Calu3 (cell line): ENCODE measurements at regions of chr2 and their contacts with region 1.

Region 1: DNA sequence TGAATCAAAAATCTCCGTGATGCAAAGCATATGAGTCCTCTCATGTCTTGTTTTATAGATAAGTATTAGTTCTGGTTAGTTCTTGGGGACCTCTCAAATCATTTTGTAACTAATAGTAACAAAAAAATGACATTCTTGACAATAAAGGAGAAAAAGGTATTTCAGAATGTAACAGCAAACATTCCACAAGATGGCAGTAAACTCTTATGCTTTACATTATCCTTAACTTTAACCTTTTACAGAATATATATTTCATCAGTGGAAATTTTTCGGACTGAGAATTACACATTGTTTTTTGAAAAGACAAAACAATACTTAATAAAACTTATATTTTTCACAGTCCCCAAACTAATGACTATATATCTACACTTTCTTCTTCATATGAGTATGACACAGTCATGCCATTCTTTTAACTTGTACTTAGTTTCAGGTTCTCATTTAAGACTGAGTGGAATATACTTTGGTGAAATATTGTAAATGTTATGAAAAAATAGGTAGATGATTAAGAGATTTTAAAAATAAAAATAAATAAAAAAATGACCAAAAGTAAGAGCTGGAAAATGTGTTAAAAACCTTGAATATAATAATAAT is 142.9 kb upstream of the NXPH2 start:
- DNase-seq: no peak
- H3K4me3 Mint-ChIP-seq: no peak overlapping the region
- H3K27ac Mint-ChIP-seq: no peak overlapping the region
- H3K4me1 Mint-ChIP-seq: peaks cover 7% of the 10 kb centered on the region
- H3K27me3 Mint-ChIP-seq: no peaks in the 10 kb centered on the region
- CTCF ChIP-seq: peak; percentile 25

Region 2: DNA sequence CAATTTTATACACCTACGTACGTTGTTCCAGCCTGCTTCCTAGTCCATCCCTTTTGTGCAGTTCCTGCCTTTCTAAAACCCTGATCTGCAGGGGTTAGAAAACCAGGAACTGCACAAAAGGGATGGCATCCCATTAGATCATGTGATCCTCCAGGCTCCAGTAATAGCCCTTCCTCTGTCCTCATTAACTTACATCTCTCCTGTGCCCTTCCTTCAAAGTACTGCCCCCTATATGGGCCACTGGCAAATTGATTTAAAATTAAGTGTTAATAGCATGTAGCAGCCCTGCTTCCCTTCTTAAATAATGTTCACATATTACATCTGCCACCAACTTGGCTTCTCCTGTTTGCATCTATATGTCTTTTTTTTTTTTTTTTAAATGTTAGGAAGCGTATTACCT is 81.6 kb before region 1 on chr2:
- CTCF ChIA-PET with region 1: no interaction called
- intact Hi-C with region 1: no loop called
- DNase-seq: no peak
- H3K4me3 Mint-ChIP-seq: no peak overlapping the region
- H3K27ac Mint-ChIP-seq: no peak overlapping the region
- H3K4me1 Mint-ChIP-seq: no peaks in the 10 kb centered on the region
- H3K27me3 Mint-ChIP-seq: no peaks in the 10 kb centered on the region
- CTCF ChIP-seq: no peak

Region 3: DNA sequence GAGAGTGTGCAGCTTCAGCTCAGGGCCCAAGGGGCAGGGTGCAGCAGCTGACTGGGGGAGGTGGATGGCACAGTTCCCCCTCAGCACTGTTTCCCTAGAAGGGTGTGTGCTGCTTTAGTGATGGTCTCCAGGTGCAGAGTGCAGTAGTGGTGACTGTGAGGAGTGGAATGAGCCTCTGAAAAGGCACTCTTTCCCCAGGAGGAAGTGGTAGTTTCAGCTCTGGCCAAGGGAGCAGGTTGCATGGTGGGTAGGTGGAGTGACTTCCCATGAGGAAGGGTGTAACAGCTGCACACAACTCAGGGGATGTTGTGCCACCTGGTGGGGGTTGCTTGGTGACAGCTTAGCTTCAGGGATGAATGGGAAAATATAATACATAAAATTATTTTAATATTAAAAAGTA is 108.7 kb after region 1 on chr2:
- CTCF ChIA-PET with region 1: interaction called, 5 read pairs
- intact Hi-C with region 1: loop called (anchors 1 kb)
- DNase-seq: peak; percentile 63
- H3K4me3 Mint-ChIP-seq: no peak overlapping the region
- H3K27ac Mint-ChIP-seq: no peak overlapping the region
- H3K4me1 Mint-ChIP-seq: peaks cover 7% of the 10 kb centered on the region
- H3K27me3 Mint-ChIP-seq: no peaks in the 10 kb centered on the region
- CTCF ChIP-seq: no peak

Region 4: GRCh38 chr2:139805441-139805840 is 882.4 kb after region 1 on chr2:
- CTCF ChIA-PET with region 1: no interaction called
- intact Hi-C with region 1: loop called (anchors 10 kb)
- DNase-seq: no peak
- H3K4me3 Mint-ChIP-seq: no peak overlapping the region
- H3K27ac Mint-ChIP-seq: no peak overlapping the region
- H3K4me1 Mint-ChIP-seq: no peaks in the 10 kb centered on the region
- H3K27me3 Mint-ChIP-seq: no peaks in the 10 kb centered on the region
- CTCF ChIP-seq: no peak